Gastrocnemius medialis (tissue), 4 donors: ENCODE measurements at regions of chr11 and their contacts with region 1.

Region 1: DNA sequence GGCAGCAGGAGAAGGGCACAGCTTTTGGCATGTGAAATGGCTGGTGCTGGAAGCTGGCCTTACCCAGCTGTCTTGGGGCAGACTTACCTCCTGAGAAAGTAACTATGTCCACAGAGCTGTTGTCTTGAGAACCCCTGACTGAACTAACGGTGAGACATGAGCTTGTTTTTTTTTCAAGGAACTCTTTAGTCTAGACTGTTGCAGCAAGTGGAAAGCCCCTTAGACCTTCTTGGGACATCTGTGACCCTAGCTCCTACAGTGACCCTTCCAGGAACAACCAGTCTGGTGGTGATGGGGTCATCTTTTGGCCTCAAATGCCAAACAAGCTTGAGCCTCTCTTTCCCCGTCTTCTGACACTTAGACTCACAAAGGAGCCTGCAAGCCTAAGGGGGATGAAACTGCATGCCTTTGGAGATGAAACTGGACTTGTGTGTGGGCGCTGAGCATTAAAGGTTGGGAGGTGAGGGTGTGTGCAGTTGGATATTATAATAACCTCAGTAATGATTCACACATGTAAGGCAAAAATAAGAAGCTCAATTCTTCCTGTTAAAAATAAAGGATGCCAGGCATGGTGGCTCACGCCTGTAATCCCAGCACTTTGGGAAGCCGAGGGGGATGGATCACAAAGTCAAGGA is 35.4 kb downstream of the SDHD start:
- DNase-seq: no peak
- ATAC-seq: no peak
- H3K4me3 ChIP-seq: no peak overlapping the region
- H3K27ac ChIP-seq: no peak overlapping the region
- H3K4me1 ChIP-seq: peaks cover 0 to 10% of the 10 kb centered on the region in 2 donors
- H3K27me3 ChIP-seq: no peaks in the 10 kb centered on the region
- CTCF ChIP-seq: no peak
- POLR2A ChIP-seq: no peak

Region 2: GRCh38 chr11:111479666-111480065 is 642.4 kb before region 1 on chr11:
- in situ Hi-C with region 1: no loop called
- intact Hi-C with region 1: no loop called
- DNase-seq: no peak
- ATAC-seq: no peak
- H3K4me3 ChIP-seq: no peak overlapping the region
- H3K27ac ChIP-seq: no peak overlapping the region
- H3K4me1 ChIP-seq: no peaks in the 10 kb centered on the region
- H3K27me3 ChIP-seq: no peaks in the 10 kb centered on the region
- CTCF ChIP-seq: peak in 1 of 5 experiments; percentile 22
- POLR2A ChIP-seq: no peak

Region 3: DNA sequence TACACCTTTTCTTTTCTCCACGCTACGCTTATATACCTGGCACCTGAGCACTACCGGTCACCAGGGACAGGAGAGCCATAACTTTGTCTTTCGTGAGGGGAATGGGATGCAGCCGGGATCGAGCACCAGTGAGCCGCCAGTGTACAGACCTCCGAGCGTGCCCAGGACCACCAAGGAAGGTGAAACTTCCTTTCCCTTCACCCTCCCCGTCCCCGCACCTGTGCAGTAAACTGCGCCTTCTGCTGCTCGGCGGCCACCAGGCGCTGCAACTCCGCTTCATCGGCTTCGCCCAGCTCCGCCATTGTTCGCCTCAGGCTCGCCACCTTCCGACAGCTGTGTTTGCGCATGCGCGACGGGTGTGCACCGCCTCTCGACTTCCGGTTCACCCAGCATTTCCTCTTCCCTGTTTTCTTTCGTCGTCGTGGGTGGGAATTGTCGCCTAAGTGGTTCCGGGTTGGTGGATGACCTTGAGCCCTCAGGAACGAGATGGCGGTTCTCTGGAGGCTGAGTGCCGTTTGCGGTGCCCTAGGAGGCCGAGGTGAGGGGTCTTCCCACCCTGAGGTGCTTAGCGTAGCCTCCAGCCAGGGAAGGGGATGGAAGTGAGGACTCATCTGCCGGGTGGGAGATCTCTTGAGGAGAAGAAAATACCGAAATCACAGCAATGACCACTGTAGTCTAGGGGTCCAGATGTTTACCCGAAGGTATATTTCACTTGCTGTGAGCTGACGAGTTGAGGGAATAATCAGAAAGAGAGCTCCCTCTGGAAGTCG is 35.5 kb before region 1 on chr11 and contains the starts of genes SDHD and TIMM8B:
- in situ Hi-C with region 1: no loop called
- intact Hi-C with region 1: no loop called
- DNase-seq: peak; percentile 94 to 96
- ATAC-seq: peak; percentile 96 to 97
- H3K4me3 ChIP-seq: peak within 1 kb of the TSS; percentile 82 to 99 (median 90)
- H3K27ac ChIP-seq: peak within 1 kb of the TSS; percentile 79 to 97 (median 90)
- H3K4me1 ChIP-seq: peaks cover 49 to 66% of the 10 kb centered on the region in 2 donors
- H3K27me3 ChIP-seq: no peaks in the 10 kb centered on the region
- CTCF ChIP-seq: peak in 4 of 5 experiments; percentile 19 to 39 (median 33)
- POLR2A ChIP-seq: peak; percentile 86 to 92
- total RNA-seq, gene SDHD: 170 to 261 (median 202) TPM
- total RNA-seq, gene TIMM8B: 60.3 to 93.2 (median 69.4) TPM

Region 4: DNA sequence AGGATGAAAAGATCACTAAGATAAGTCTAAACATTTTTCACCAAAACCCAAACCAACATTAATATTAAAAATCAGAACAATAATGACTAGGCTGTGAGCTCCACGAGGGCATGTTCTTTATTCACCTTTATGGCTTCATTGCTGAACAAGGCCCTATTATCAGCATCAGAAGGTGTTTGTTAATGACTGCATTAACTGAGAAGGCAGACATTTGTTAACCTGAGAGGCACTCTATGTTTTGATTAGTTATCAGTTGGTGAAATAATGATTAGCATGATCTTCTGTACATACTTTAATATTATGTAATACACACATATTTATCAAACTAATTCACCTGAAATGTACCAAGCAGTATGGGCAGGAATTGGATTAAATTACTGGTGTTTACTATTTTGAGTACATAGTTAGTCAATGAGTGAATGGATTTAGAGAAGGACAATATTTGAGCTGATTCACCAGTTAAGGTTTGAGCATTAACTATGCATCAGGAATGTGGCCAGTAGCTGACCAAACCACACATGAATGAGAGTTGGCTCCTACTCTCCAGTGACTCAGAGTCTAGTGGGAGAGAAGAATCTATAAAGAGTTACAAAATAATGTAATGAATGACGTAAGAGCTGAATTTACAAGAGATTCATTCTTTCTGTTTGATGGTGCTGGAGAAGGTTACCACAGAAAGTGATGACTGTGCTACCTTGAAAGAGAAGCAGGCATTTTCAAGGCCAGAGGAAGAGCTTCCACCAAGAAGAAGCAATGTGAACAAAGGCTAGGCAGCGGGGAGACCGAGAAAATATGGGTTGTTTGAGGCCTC is 35.1 kb after region 1 on chr11:
- in situ Hi-C with region 1: no loop called
- intact Hi-C with region 1: loop called (anchors 5 kb)
- DNase-seq: no peak
- ATAC-seq: peak; percentile 81 to 87
- H3K4me3 ChIP-seq: no peak overlapping the region
- H3K27ac ChIP-seq: peak overlapping the region; percentile 34 to 66 (median 44)
- H3K4me1 ChIP-seq: peaks cover 15 to 38% of the 10 kb centered on the region in 2 donors
- H3K27me3 ChIP-seq: no peaks in the 10 kb centered on the region
- CTCF ChIP-seq: no peak
- POLR2A ChIP-seq: no peak